MCF 10A (cell line): ENCODE measurements at regions of chr2 and their contacts with region 1.

Region 1: GRCh38 chr2:73212448-73213176 is 1.4 kb upstream of the SMYD5 start:
- DNase-seq: peak; percentile 68
- H3K4me3 Mint-ChIP-seq: no peak overlapping the region
- H3K27ac Mint-ChIP-seq: no peak overlapping the region
- H3K4me1 Mint-ChIP-seq: peaks cover 27% of the 10 kb centered on the region
- H3K27me3 Mint-ChIP-seq: no peaks in the 10 kb centered on the region
- CTCF ChIP-seq: peak; percentile 84

Region 2: GRCh38 chr2:73085691-73086360 is 126.8 kb before region 1 on chr2:
- CTCF ChIA-PET with region 1: interaction called, 21 read pairs
- POLR2A ChIA-PET with region 1: interaction called, 3 read pairs
- intact Hi-C with region 1: loop called (anchors 5 kb)
- DNase-seq: peak; percentile 72
- H3K4me3 Mint-ChIP-seq: no peak overlapping the region
- H3K27ac Mint-ChIP-seq: no peak overlapping the region
- H3K4me1 Mint-ChIP-seq: peaks cover 24% of the 10 kb centered on the region
- H3K27me3 Mint-ChIP-seq: no peaks in the 10 kb centered on the region
- CTCF ChIP-seq: peak; percentile 89

Region 3: DNA sequence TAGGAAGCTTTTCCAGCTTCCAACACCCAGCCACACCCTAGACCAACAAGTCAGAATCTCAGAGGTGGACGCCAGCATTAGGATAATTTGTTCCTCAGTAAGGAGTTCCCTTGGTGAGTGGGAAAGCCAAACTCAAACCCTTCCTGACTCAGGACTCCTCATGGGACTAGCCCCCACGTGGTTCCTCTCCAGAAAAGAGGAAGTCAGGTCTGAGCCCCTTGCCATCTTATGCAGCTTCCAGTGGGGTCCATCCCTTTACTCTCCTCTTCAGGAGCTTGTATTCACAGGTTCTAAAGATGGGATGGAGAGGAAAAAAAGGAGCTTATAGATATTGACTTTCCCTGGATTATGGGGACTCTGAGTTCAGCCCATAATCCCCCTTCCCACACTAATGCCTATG is 25.1 kb before region 1 on chr2:
- CTCF ChIA-PET with region 1: interaction called, 11 read pairs
- POLR2A ChIA-PET with region 1: interaction called, 3 read pairs
- intact Hi-C with region 1: no loop called
- DNase-seq: no peak
- H3K4me3 Mint-ChIP-seq: no peak overlapping the region
- H3K27ac Mint-ChIP-seq: no peak overlapping the region
- H3K4me1 Mint-ChIP-seq: no peaks in the 10 kb centered on the region
- H3K27me3 Mint-ChIP-seq: peaks cover 54% of the 10 kb centered on the region
- CTCF ChIP-seq: no peak

Region 4: DNA sequence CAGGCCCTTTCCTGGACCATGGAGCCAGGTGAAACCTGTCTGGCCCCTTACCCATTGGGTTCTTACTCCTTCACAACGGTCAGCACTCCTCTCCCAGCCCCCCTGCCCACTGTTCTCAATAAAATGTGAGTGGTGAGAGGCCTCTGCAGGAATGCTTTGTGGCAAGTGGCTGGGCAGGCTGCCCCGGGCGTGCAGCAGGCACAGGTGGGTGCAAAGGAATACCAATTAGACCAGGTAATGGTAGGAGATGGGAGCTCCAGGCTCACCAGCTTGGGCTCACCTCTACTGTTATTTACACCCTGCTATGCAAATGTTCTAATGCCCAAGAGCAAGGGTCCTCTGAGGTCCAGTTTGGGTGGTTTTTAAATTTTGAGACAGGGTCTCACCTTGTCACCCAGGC is 14.5 kb after region 1 on chr2:
- CTCF ChIA-PET with region 1: interaction called, 36 read pairs
- POLR2A ChIA-PET with region 1: interaction called, 74 read pairs
- intact Hi-C with region 1: no loop called
- DNase-seq: no peak
- H3K4me3 Mint-ChIP-seq: no peak overlapping the region
- H3K27ac Mint-ChIP-seq: no peak overlapping the region
- H3K4me1 Mint-ChIP-seq: no peaks in the 10 kb centered on the region
- H3K27me3 Mint-ChIP-seq: no peaks in the 10 kb centered on the region
- CTCF ChIP-seq: no peak

Region 5: DNA sequence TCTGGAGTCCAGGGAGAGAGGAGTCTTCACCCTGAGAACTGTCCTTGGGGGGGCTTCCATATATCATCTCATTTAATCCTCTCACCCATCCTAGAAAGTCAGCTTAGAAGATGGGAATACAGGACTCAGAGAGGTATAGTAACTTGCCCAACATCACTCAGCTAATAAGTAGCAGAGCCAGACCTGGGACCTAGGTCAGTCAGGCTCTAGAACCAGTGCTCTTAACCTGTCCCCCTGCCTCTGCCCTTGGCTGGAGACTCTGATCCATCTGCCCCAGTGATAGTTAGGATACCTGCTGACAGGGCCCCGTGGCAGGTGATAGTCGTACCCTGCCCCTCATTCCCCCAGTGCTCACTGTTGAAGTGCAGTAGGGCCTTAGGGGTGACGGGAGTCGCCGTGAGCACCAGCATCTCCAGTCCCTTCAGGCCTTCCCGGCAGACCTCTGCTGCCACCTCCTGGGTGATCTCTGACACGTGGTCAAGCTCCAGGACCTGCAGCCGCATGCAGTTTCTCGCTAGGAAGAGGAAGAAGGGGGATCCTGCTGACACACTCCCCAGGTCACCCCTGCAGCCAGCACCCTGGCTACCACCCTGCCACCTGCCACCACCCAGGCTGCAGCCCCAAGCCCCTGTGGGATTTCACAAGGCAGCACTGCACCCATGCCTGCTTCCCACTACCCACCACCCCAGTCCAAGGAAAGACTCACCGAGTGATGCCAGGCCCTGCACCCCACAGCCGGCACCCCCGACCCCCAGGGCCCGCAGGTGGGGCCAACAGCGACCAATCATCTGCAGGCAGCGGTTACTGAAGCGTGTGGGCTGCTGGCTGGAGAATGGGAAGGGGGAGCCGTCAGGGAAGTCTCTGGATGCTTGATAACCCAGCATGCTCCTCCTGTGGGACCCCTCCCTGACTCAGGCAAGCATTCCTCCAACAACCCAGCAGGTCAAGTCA is 47.7 kb after region 1 on chr2:
- CTCF ChIA-PET with region 1: interaction called, 7 read pairs
- POLR2A ChIA-PET with region 1: no interaction called
- intact Hi-C with region 1: loop called (anchors 1 kb)
- DNase-seq: peak; percentile 64
- H3K4me3 Mint-ChIP-seq: no peak overlapping the region
- H3K27ac Mint-ChIP-seq: no peak overlapping the region
- H3K4me1 Mint-ChIP-seq: no peaks in the 10 kb centered on the region
- H3K27me3 Mint-ChIP-seq: no peaks in the 10 kb centered on the region
- CTCF ChIP-seq: peak; percentile 68